Prostate gland (tissue), 2 donors: ENCODE measurements at regions of chr7 and their contacts with region 1.

Region 1: DNA sequence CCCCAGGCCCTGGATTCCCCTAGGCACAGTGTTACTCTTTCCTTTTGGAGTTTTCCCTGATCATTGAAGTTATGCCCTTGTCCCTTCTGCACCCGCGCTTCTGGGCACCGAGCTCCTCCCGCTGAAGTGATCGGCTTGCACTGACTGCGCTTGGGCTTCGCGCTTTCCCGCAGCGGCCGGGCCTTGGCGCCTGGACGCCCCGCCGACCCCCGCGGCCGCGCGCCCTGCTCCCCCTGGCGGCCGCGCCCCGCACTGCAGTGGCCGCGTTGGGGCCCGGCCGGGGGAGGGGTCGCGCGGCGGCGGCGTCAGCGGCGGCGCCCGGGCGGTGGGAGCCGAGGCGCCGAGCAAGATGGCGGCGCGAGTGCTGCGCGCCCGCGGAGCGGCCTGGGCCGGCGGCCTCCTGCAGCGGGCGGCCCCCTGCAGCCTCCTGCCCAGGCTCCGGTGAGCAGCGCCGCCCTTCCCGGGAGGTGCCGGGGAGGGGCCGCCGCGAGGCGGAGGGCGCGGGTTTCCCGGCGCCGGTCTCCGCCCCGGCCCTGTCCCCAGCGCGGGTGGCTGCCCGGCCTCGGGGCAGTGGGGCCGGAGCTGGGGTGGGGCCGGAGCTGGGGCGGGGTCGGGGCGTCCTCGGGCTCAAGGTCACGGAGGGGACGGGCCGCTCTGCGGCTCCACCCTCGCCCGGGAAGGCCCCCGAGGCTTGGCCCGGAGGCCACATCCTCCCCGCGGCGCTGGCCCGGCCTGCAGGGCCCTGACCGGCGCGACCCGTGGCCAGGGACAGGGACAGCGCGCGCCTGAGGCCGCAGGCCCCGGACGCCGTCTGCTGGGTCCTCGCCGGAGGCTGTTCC is at the start of gene NIPSNAP2:
- DNase-seq: peak; percentile 39
- H3K4me3 ChIP-seq: peak within 1 kb of the TSS; percentile 64 to 78
- H3K27ac ChIP-seq: peak within 1 kb of the TSS; percentile 85 to 96
- H3K4me1 ChIP-seq: peaks cover 6% of the 10 kb centered on the region
- H3K27me3 ChIP-seq: no peaks in the 10 kb centered on the region
- CTCF ChIP-seq: peak; percentile 30 to 77 (median 64)
- POLR2A ChIP-seq: no peak
- total RNA-seq, gene NIPSNAP2: 83.3 to 84.0 TPM

Region 2: DNA sequence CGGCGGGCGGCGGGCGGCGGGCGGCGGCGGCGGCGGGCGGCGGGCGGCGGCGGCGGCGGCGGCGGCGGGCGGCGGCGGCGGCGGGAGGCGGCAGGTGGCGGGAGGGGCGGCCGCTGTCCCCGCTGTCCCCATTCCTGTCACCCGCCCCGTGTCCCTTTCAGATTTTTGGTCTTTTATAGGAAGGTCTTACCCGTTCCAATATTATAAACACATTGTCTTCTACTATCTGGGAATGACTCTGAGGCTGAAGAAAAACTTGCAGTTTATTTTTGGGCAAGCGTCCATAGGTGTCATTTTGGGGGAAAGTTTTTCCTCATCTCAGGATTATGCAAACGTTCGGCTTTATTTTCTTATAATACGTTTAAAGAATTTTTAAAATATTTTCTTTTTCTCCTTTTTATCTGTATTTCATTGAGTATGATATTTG is 76.6 kb before region 1 on chr7:
- intact Hi-C with region 1: loop called (anchors 5 kb)
- DNase-seq: no peak
- H3K4me3 ChIP-seq: peak overlapping the region; percentile 33 to 36
- H3K27ac ChIP-seq: peak overlapping the region in 1 of 2 donors; percentile 32
- H3K4me1 ChIP-seq: no peaks in the 10 kb centered on the region
- H3K27me3 ChIP-seq: no peaks in the 10 kb centered on the region
- CTCF ChIP-seq: no peak
- POLR2A ChIP-seq: no peak

Region 3: DNA sequence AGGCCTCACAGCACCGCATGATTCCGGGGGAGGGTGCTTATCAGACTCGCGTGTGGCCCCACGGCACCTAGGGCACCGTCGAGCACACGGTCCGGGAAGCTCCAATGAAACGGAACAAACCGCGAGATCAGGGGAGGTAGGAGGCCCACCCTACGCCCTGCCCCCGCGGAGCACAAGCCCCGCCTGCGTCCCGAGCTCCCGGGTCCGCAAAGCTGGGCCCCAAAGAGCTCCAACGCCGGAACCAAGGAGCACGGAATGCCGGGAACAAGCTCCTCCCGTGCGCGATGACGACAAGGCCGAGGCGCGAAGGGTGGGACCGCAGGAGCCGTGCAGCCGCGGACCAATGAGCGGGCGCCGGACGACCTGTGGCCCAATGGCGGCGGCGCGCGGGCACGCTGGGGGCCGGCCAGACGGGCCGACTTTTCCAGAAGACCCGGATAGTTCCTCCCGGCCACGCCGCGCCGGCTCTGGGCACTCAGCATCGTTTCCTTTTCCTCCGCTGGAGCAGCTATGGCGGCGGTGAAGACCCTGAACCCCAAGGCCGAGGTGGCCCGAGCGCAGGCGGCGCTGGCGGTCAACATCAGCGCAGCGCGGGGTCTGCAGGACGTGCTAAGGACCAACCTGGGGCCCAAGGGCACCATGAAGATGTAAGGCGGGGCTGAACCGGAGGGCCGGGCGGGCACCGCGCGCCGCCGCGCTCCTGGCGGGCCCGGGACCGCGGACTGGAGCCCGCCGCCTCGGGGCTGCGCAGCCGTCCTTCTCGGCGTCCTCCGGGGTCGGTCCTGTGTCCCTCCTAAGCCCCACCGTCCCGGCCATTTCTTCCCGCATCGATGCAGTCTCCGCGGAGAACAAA is 87.1 kb after region 1 on chr7 and contains the starts of genes CCT6A and PSPH:
- intact Hi-C with region 1: loop called (anchors 10 kb)
- DNase-seq: peak; percentile 99
- H3K4me3 ChIP-seq: peak within 1 kb of the TSS; percentile 66 to 83
- H3K27ac ChIP-seq: peak within 1 kb of the TSS; percentile 89
- H3K4me1 ChIP-seq: no peaks in the 10 kb centered on the region
- H3K27me3 ChIP-seq: no peaks in the 10 kb centered on the region
- CTCF ChIP-seq: peak in 1 of 4 experiments; percentile 20
- POLR2A ChIP-seq: peak; percentile 83
- total RNA-seq, gene CCT6A: 60.0 to 64.3 TPM
- total RNA-seq, gene PSPH: 25.8 to 47.1 TPM